ENCODE measurements at regions of chr15 and their contacts with region 1.

Region 1: DNA sequence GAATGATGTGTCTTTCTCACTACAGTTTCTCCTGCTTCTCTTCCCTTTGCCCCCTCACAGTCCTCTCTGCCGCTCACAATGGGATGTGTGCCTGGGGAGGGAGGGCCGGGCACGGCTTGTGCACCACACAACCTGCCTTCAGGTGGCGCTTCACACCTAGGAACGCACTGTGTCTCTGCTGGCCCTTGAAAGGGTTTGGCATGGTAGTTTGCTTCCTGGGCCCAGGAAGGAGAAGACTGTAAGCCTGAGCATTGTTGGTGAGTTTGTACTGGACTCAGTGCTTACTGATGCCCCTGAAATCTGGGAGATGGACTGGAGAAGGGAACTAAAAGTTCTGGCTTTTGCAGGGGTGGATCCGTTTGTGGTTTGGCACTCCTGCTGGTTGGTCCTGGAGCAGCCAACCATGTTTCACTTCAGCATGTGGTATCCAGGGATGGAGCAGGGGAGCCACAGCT is 9.2 kb downstream of the ALPK3 start:
- DNase-seq: peak; percentile 48
- ATAC-seq: peak; percentile 89
- H3K4me3 ChIP-seq: 0 out of 6 replicates have a peak overlapping the region, but pooled peaks of 1 of the 3 experiments have one; percentile 36
- H3K27ac ChIP-seq: no peak overlapping the region
- H3K4me1 ChIP-seq: peaks cover 42% of the 10 kb centered on the region
- H3K27me3 ChIP-seq: no peaks in the 10 kb centered on the region; a peak in 2 of 5 replicates
- CTCF ChIP-seq: peak; percentile 97
- EP300 ChIP-seq: no peak
- POLR2A ChIP-seq: no peak
- RAD21 ChIP-seq: peak; percentile 60

Region 2: DNA sequence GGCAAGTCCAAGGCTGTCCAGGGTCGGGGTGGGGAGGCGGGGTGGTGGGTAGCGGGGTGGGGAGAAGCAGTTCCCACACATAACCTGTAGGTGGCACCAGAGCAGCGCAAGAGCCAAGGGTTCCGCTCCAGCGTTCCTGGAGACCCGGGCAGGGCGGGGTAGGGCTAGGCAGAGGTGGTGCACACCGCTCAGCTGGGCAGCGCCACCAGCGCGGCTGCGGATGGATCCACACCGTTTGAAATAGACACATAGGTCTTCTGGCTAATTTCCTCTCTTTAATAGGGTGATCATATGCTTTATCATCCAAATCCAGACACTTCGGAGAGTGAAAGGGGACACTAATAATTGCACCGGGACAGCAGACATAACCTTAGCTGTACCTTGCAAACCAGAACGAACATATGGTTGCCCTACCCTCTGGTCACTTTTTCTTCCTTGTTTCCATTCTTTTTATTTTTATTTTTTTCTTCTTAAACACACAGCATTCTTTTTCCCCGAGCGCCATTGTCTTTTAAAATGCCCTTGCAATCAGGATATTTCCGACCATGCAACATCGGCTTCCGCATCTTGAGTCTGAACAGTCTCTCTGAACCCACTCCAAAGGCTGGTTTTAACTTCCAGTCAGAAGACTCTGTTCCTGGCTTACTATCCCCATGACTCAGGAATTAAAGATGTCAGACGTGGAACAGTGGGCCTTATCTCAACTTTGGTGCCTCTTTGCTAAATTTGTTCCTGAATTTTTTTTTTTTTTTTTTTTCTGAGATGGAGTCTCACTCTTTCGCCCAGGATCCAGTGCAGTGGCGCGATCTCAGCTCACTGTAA is 238.1 kb before region 1 on chr15:
- CTCF ChIA-PET with region 1: no interaction called
- POLR2A ChIA-PET with region 1: no interaction called
- in situ Hi-C with region 1: loop called (anchors 10 kb)
- intact Hi-C with region 1: no loop called
- DNase-seq: peak; percentile 83
- ATAC-seq: peak; percentile 100
- H3K4me3 ChIP-seq: peak overlapping the region; percentile 41 to 62 (median 50)
- H3K27ac ChIP-seq: no peak overlapping the region
- H3K4me1 ChIP-seq: peaks cover 27% of the 10 kb centered on the region
- H3K27me3 ChIP-seq: no peaks in the 10 kb centered on the region; a peak in 2 of 5 replicates
- CTCF ChIP-seq: peak; percentile 89
- EP300 ChIP-seq: no peak
- POLR2A ChIP-seq: no peak
- RAD21 ChIP-seq: peak; percentile 93

Region 3: GRCh38 chr15:84810073-84810840 is 16.1 kb before region 1 on chr15:
- CTCF ChIA-PET with region 1: no interaction called
- POLR2A ChIA-PET with region 1: no interaction called
- in situ Hi-C with region 1: no loop called
- intact Hi-C with region 1: no loop called
- DNase-seq: no peak
- ATAC-seq: peak; percentile 39; the same call in 2 of the 3 replicates
- H3K4me3 ChIP-seq: no peak overlapping the region
- H3K27ac ChIP-seq: no peak overlapping the region
- H3K4me1 ChIP-seq: peaks cover 25% of the 10 kb centered on the region
- H3K27me3 ChIP-seq: no peaks in the 10 kb centered on the region
- CTCF ChIP-seq: no peak
- EP300 ChIP-seq: no peak
- POLR2A ChIP-seq: no peak
- RAD21 ChIP-seq: no peak

Region 4: GRCh38 chr15:84871428-84872305 is 45.3 kb after region 1 on chr15:
- CTCF ChIA-PET with region 1: no interaction called
- POLR2A ChIA-PET with region 1: no interaction called
- in situ Hi-C with region 1: no loop called
- intact Hi-C with region 1: loop called (anchors 10 kb)
- DNase-seq: no peak
- ATAC-seq: no peak
- H3K4me3 ChIP-seq: no peak overlapping the region
- H3K27ac ChIP-seq: no peak overlapping the region
- H3K4me1 ChIP-seq: peaks cover 37% of the 10 kb centered on the region
- H3K27me3 ChIP-seq: no peaks in the 10 kb centered on the region; a peak in 1 of 5 replicates
- CTCF ChIP-seq: 0 out of 2 replicates have a peak, but pooled peaks have one; percentile 4
- EP300 ChIP-seq: no peak
- POLR2A ChIP-seq: no peak
- RAD21 ChIP-seq: no peak

Region 5: DNA sequence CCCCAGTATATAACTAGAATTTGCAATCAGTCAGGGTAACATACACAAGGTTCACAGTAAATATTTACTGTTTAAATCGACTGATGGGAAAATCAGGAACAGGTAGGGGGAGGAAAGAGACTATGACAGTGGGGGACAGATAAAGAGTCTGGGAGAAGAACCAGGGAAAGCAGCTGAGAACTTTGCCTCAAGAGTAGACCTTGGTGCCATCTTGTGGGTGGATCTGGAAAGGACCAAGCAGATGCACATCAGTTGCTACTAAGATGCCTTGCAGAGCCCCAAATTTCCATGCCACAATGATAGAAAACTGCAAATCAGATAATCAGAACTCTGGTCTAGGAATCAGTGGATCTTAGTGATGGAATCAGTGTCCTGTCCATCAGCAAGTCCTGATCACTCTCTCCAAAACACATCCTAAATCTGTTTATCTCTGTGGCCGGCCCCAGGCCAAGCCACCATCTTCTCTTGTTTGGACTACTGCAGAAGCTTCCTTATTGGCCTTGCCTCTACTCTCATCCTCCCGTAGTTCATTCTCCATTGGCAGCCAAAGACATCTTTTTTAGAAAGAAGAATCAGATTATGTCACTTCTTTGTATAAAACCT is 218.0 kb after region 1 on chr15:
- CTCF ChIA-PET with region 1: no interaction called
- POLR2A ChIA-PET with region 1: no interaction called
- in situ Hi-C with region 1: no loop called
- intact Hi-C with region 1: loop called (anchors 5 kb)
- DNase-seq: peak; percentile 63
- ATAC-seq: peak; percentile 68
- H3K4me3 ChIP-seq: no peak overlapping the region
- H3K27ac ChIP-seq: no peak overlapping the region
- H3K4me1 ChIP-seq: peaks cover 79% of the 10 kb centered on the region
- H3K27me3 ChIP-seq: no peaks in the 10 kb centered on the region
- CTCF ChIP-seq: peak; percentile 84
- EP300 ChIP-seq: no peak
- POLR2A ChIP-seq: no peak
- RAD21 ChIP-seq: peak; percentile 80

Region 6: DNA sequence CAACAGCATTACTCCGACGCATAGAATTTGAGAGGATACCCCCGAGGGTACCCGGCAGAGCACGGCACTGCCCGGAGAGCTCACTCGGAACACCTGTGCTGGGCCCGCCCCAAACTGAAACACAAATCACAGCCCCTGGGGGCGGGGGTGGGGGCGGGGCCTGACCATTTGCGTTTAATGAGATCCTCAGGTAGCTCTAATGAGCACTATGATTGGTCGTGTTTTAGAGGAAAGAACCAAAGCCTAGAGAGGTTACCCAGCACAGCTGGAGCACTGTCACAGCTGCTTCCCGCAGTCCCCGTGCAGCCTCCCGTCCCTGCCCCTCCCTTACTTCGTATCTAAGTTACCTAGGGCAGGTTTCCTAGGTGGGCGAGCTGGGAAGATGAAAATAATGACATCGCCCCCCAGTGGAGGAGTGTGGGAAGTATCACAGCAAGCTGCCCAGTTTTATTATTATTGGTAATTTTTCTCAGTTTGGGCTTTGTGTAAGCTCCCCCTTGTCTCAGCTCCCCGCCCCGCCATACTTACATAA is 342.3 kb after region 1 on chr15:
- CTCF ChIA-PET with region 1: no interaction called
- POLR2A ChIA-PET with region 1: no interaction called
- in situ Hi-C with region 1: loop called (anchors 25 kb)
- intact Hi-C with region 1: no loop called
- DNase-seq: peak; percentile 24
- ATAC-seq: peak; percentile 77
- H3K4me3 ChIP-seq: peak overlapping the region; percentile 46 to 61 (median 47)
- H3K27ac ChIP-seq: no peak overlapping the region
- H3K4me1 ChIP-seq: peaks cover 22% of the 10 kb centered on the region
- H3K27me3 ChIP-seq: no peaks in the 10 kb centered on the region; a peak in 1 of 5 replicates
- CTCF ChIP-seq: peak; percentile 63
- EP300 ChIP-seq: no peak
- POLR2A ChIP-seq: no peak
- RAD21 ChIP-seq: no peak